Natural killer cell (primary cell): ENCODE measurements at regions of chr4 and their contacts with region 1.

Region 1: DNA sequence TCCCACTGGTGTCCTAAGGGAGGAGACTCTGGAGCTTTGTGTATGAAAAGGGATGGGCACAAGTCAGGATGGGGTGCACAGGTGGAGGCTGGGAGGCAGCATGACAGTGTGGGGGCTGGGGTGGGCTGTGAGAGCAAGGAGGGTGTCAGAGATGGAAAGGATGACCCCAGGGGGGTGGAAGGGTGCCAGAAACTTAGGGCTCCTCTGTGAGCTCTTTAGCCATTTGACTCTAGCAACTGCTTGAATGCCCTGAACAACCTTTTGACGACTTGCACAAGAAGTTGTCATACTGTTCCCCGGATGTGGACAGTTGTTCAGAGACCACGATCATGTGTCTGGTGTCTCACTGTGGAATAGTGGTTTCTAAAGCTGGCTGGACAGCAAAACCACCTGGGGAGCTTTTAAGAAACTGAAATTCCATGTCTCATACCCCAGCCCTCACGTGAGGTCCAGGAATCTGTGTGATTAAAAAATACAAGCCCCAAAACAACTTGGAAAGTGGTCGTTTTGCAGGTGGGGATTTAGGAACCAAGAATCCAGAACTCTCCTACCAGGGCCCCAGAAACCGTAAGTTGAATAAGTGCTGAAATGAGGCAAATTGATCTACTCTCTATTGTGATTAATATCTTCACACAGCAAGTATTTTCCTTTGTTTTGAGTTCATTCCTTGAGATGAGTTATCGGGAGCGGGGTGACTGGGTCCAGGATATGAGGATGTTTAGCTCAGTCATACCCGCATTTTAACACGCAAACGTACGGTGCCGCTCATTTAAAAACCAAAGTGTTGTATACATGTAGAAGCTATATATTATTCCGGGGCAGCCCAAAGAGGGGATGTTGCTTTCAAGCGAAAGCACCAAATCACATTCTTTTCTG is 3.4 kb downstream of the RHOH start:
- DNase-seq: peak; percentile 53 to 82
- ATAC-seq: peak; percentile 47 to 73 (median 69)
- H3K4me3 ChIP-seq: peak overlapping the region; percentile 67
- H3K4me3 Mint-ChIP-seq: peak overlapping the region; percentile 100
- H3K27ac ChIP-seq: peak overlapping the region; percentile 92
- H3K27ac Mint-ChIP-seq: peak overlapping the region; percentile 99 to 100
- H3K4me1 ChIP-seq: peaks cover 53% of the 10 kb centered on the region
- H3K4me1 Mint-ChIP-seq: peaks cover 84 to 95% of the 10 kb centered on the region in 2 donors
- H3K27me3 ChIP-seq: no peaks in the 10 kb centered on the region
- H3K27me3 Mint-ChIP-seq: no peaks in the 10 kb centered on the region
- CTCF ChIP-seq: no peak

Region 2: GRCh38 chr4:38663801-38664705 is 1536.2 kb before region 1 on chr4 and contains the start of gene KLF3:
- intact Hi-C with region 1: loop called (anchors 5 kb)
- DNase-seq: peak; percentile 90 to 95
- ATAC-seq: peak; percentile 71 to 91 (median 80)
- H3K4me3 ChIP-seq: peak within 1 kb of the TSS; percentile 85
- H3K4me3 Mint-ChIP-seq: peak within 1 kb of the TSS; percentile 97
- H3K27ac ChIP-seq: peak within 1 kb of the TSS; percentile 98
- H3K27ac Mint-ChIP-seq: peak within 1 kb of the TSS; percentile 99
- H3K4me1 ChIP-seq: peaks cover 38% of the 10 kb centered on the region
- H3K4me1 Mint-ChIP-seq: peaks cover 55 to 62% of the 10 kb centered on the region in 2 donors
- H3K27me3 ChIP-seq: no peaks in the 10 kb centered on the region
- H3K27me3 Mint-ChIP-seq: no peaks in the 10 kb centered on the region
- CTCF ChIP-seq: no peak
- total RNA-seq, gene KLF3: 109 to 114 (median 112) TPM

Region 3: GRCh38 chr4:39505581-39505980 is 694.7 kb before region 1 on chr4:
- intact Hi-C with region 1: no loop called
- DNase-seq: no peak
- ATAC-seq: no peak
- H3K4me3 ChIP-seq: no peak overlapping the region
- H3K4me3 Mint-ChIP-seq: no peak overlapping the region
- H3K27ac ChIP-seq: no peak overlapping the region
- H3K27ac Mint-ChIP-seq: no peak overlapping the region
- H3K4me1 ChIP-seq: no peaks in the 10 kb centered on the region
- H3K4me1 Mint-ChIP-seq: no peaks in the 10 kb centered on the region
- H3K27me3 ChIP-seq: no peaks in the 10 kb centered on the region
- H3K27me3 Mint-ChIP-seq: no peaks in the 10 kb centered on the region
- CTCF ChIP-seq: no peak

Region 4: DNA sequence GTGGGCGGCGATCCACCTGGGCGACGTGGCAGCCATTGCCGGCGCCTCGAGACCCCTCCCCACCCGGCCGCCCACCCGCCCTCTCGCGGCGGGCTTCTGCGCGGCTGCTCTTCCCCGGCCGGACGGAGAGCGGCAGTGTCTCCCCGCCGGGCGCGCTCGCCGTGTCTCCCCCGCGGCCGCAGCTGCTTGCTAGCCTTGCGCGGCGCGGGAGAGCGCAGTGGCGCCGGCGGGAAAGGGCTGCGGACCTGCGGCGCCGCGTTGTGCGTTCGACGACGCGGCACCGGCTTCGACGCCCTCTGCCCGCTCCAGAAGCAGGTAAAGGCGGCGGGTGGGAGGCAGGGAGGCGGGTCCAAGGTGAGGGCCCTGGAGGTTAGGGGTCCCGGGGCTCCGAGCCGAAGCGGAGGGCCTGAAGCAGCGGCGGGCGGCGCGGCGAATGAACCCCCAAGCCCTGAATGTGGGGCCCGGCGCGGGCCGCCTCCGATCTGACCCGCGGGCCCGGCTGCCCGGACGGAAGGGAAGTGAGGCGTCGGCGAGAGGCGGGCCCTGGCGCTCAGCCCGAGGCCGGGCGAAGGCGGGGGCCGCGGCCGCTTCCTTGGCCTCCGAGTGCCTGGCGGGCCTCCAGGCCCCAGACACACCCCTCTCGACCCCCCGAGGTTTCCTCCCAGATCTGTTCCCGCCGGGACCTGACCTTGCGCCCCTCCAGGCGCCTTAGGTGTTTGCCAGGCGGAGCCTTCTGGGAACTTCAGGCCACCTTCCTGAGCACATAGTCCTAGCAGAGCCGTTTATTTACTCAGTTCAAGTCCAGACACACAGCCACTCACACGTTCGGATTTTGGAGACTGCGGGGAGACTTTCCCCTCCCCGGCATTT is 143.3 kb before region 1 on chr4 and contains the start of gene N4BP2:
- intact Hi-C with region 1: loop called (anchors 2 kb)
- DNase-seq: peak; percentile 63 to 89
- ATAC-seq: peak; percentile 65 to 81 (median 76)
- H3K4me3 ChIP-seq: peak within 1 kb of the TSS; percentile 65
- H3K4me3 Mint-ChIP-seq: peak within 1 kb of the TSS; percentile 95
- H3K27ac ChIP-seq: peak within 1 kb of the TSS; percentile 91
- H3K27ac Mint-ChIP-seq: peak within 1 kb of the TSS; percentile 91 to 95
- H3K4me1 ChIP-seq: peaks cover 18% of the 10 kb centered on the region
- H3K4me1 Mint-ChIP-seq: peaks cover 26 to 39% of the 10 kb centered on the region in 2 donors
- H3K27me3 ChIP-seq: no peaks in the 10 kb centered on the region
- H3K27me3 Mint-ChIP-seq: no peaks in the 10 kb centered on the region
- CTCF ChIP-seq: peak; percentile 74
- total RNA-seq, gene N4BP2: 16.4 to 22.4 (median 17.5) TPM

Region 5: DNA sequence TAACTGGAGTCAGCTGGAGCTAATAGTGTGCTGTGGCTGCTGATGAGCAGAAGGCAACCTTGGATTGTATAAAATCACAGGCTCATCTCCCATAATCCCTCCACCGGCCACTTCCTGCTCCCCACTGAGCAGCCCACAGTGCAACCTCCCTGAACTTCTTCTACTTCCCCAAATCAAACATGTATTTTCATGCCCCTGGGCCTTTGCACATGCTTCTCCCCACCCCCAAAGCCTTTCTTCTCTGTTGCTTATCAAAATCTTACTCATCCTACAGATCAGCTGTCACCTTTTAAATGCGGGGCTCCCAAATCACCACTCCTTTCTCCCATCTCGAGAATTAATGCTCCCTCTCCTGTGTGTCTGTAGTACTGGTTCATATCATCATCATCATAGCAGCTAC is 32.4 kb after region 1 on chr4:
- intact Hi-C with region 1: loop called (anchors 5 kb)
- DNase-seq: no peak
- ATAC-seq: no peak
- H3K4me3 ChIP-seq: no peak overlapping the region
- H3K4me3 Mint-ChIP-seq: peak overlapping the region; percentile 25
- H3K27ac ChIP-seq: no peak overlapping the region
- H3K27ac Mint-ChIP-seq: peak overlapping the region in 1 of 2 donors; percentile 53
- H3K4me1 ChIP-seq: peaks cover 69% of the 10 kb centered on the region
- H3K4me1 Mint-ChIP-seq: peaks cover 72 to 80% of the 10 kb centered on the region in 2 donors
- H3K27me3 ChIP-seq: no peaks in the 10 kb centered on the region
- H3K27me3 Mint-ChIP-seq: no peaks in the 10 kb centered on the region
- CTCF ChIP-seq: no peak

Region 6: DNA sequence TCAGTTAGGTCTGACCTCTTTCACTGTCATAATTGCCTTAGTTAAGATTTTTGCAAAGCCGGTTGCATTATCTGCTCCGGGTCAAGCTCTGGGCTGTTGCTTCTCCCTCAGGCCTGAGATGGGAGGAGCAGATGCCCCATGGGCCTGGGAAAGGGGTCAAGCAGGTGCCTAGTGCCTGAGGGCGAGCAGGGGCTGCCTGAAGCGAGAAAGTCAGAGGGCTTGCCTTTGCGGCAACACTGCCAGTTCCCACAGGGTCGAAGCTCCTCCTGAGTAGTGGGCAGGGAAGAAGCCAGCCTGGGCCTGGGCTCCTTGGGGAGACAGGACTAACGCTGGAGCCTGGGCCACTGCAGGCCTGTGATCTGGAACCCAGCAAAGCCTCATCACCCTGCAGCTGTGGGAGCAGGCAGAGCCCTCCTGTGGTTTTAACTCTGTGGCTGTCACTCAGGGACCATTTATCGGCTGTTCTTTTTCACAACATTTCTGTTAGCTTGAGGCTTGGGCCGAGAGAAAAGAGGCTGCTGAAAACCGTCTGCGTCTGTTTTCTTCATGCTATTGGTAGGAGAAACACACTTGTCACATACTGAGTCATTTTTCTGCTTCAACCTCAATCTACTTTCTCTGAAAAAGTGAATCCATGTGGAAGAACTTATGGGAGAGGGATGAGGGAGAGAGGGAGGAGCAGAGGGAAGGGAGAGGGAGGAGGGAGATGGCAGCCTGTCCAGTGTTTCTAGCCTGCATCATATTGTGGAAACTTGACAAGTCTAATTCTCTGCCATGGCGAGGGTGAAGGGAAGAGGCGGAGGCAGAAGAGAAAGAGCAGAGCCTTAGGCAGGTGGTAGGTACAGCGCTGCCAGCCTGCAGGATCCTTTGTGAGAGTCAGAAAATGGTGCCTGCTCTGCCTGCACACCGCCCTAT is 65.0 kb after region 1 on chr4:
- intact Hi-C with region 1: loop called (anchors 1 kb)
- DNase-seq: peak; percentile 68 to 83
- ATAC-seq: peak; percentile 86 to 96 (median 90)
- H3K4me3 ChIP-seq: no peak overlapping the region
- H3K4me3 Mint-ChIP-seq: peak overlapping the region; percentile 77
- H3K27ac ChIP-seq: peak overlapping the region; percentile 61
- H3K27ac Mint-ChIP-seq: peak overlapping the region; percentile 83 to 84
- H3K4me1 ChIP-seq: peaks cover 41% of the 10 kb centered on the region
- H3K4me1 Mint-ChIP-seq: peaks cover 42 to 49% of the 10 kb centered on the region in 2 donors
- H3K27me3 ChIP-seq: no peaks in the 10 kb centered on the region
- H3K27me3 Mint-ChIP-seq: peaks cover 0 to 2% of the 10 kb centered on the region in 2 donors
- CTCF ChIP-seq: no peak